GM12878 (cell line): ENCODE measurements at regions of chr14 and their contacts with region 1.

Region 1: GRCh38 chr14:34539407-34540180 is at the start of gene EAPP:
- DNase-seq: peak; percentile 80
- ATAC-seq: peak; percentile 100
- H3K4me3 ChIP-seq: peak within 1 kb of the TSS; percentile 88
- H3K27ac ChIP-seq: peak within 1 kb of the TSS; percentile 77
- H3K4me1 ChIP-seq: 0 out of 2 replicates have a peak, but pooled peaks cover 3% of the 10 kb centered on the region
- H3K27me3 ChIP-seq: no peaks in the 10 kb centered on the region
- CTCF ChIP-seq: no peak
- EP300 ChIP-seq: no peak
- POLR2A ChIP-seq: peak; percentile 95
- RAD21 ChIP-seq: no peak
- polyA plus RNA-seq, gene EAPP: 84.9 to 94.6 TPM

Region 2: GRCh38 chr14:34461334-34462131 is 78.1 kb before region 1 on chr14:
- CTCF ChIA-PET with region 1: no interaction called
- POLR2A ChIA-PET with region 1: interaction called, 4 read pairs
- RAD21 ChIA-PET with region 1: no interaction called
- SMC1A ChIA-PET with region 1: interaction called, 3 read pairs
- in situ Hi-C with region 1: no loop called
- intact Hi-C with region 1: loop called (anchors 5 kb)
- DNase-seq: no peak
- ATAC-seq: peak; percentile 60
- H3K4me3 ChIP-seq: peak overlapping the region; percentile 91
- H3K27ac ChIP-seq: peak overlapping the region; percentile 78
- H3K4me1 ChIP-seq: no peaks in the 10 kb centered on the region
- H3K27me3 ChIP-seq: no peaks in the 10 kb centered on the region
- CTCF ChIP-seq: no peak
- EP300 ChIP-seq: no peak
- POLR2A ChIP-seq: no peak
- RAD21 ChIP-seq: no peak

Region 3: DNA sequence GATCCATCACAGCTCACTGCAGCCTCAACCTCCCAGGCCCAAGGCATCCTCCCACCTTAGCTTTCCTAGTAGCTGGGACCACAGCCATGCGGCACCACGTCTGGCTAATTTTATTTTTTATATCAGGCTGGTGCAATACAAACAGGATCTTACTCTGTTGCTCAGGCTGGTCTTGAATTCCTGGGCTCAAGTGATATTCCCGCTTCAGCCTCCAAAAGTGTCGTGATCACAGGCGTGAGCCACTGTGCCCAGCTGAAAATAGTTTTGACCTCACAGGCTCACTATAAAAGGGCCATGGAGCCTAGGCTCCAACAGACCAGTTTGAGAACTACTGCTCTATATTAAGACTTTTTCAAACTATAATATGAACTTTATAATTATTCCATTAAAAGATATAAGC is 53.0 kb after region 1 on chr14:
- CTCF ChIA-PET with region 1: no interaction called
- POLR2A ChIA-PET with region 1: no interaction called
- RAD21 ChIA-PET with region 1: no interaction called
- SMC1A ChIA-PET with region 1: no interaction called
- in situ Hi-C with region 1: no loop called
- intact Hi-C with region 1: no loop called
- DNase-seq: no peak
- ATAC-seq: no peak
- H3K4me3 ChIP-seq: no peak overlapping the region
- H3K27ac ChIP-seq: no peak overlapping the region
- H3K4me1 ChIP-seq: no peaks in the 10 kb centered on the region
- H3K27me3 ChIP-seq: no peaks in the 10 kb centered on the region
- CTCF ChIP-seq: no peak
- EP300 ChIP-seq: no peak
- POLR2A ChIP-seq: no peak
- RAD21 ChIP-seq: no peak